ENCODE measurements at regions of chr17 and their contacts with region 1.

Region 1: GRCh38 chr17:7561028-7561575 is 617 bp upstream of the SENP3 start:
- DNase-seq: peak; percentile 92
- H3K4me3 ChIP-seq: peak overlapping the region; percentile 94 to 99
- H3K27ac ChIP-seq: peak overlapping the region; percentile 92 to 96
- H3K4me1 ChIP-seq: peaks cover 52% of the 10 kb centered on the region
- H3K27me3 ChIP-seq: no peaks in the 10 kb centered on the region
- CTCF ChIP-seq: peak; percentile 74 to 97 (median 91)
- POLR2A ChIP-seq: no peak

Region 2: GRCh38 chr17:7435221-7435675 is 125.9 kb before region 1 on chr17 and contains the start of gene TMEM102:
- intact Hi-C with region 1: loop called (anchors 5 kb)
- DNase-seq: peak; percentile 97
- H3K4me3 ChIP-seq: peak within 1 kb of the TSS; percentile 26 to 40
- H3K27ac ChIP-seq: peak within 1 kb of the TSS; percentile 81 to 82
- H3K4me1 ChIP-seq: peaks cover 15% of the 10 kb centered on the region
- H3K27me3 ChIP-seq: no peaks in the 10 kb centered on the region
- CTCF ChIP-seq: no peak
- POLR2A ChIP-seq: peak; percentile 78
- total RNA-seq, gene TMEM102: 9.9 to 10.3 TPM

Region 3: GRCh38 chr17:7513850-7514419 is 47.2 kb before region 1 on chr17:
- intact Hi-C with region 1: loop called (anchors 1 kb)
- DNase-seq: no peak
- H3K4me3 ChIP-seq: no peak overlapping the region
- H3K27ac ChIP-seq: no peak overlapping the region
- H3K4me1 ChIP-seq: no peaks in the 10 kb centered on the region
- H3K27me3 ChIP-seq: no peaks in the 10 kb centered on the region
- CTCF ChIP-seq: no peak
- POLR2A ChIP-seq: no peak